ENCODE measurements at regions of chr11 and their contacts with region 1.

Region 1: GRCh38 chr11:33375688-33376311 is 118.6 kb downstream of the HIPK3 start:
- DNase-seq: no peak
- ATAC-seq: no peak
- H3K4me3 ChIP-seq: peak within 1 kb of the TSS; percentile 63
- H3K27ac ChIP-seq: no peak within 1 kb of the TSS
- H3K4me1 ChIP-seq: no peaks in the 10 kb centered on the region
- H3K27me3 ChIP-seq: peaks cover 0 to 42% (median 6%) of the 10 kb centered on the region in 3 donors
- CTCF ChIP-seq: no peak

Region 2: GRCh38 chr11:33329705-33330329 is 46.0 kb before region 1 on chr11:
- intact Hi-C with region 1: no loop called
- DNase-seq: no peak
- ATAC-seq: peak; percentile 70 to 84 (median 76)
- H3K4me3 ChIP-seq: no peak overlapping the region
- H3K27ac ChIP-seq: peak overlapping the region; percentile 23
- H3K4me1 ChIP-seq: peaks cover 79% of the 10 kb centered on the region
- H3K27me3 ChIP-seq: no peaks in the 10 kb centered on the region
- CTCF ChIP-seq: peak; percentile 62

Region 3: DNA sequence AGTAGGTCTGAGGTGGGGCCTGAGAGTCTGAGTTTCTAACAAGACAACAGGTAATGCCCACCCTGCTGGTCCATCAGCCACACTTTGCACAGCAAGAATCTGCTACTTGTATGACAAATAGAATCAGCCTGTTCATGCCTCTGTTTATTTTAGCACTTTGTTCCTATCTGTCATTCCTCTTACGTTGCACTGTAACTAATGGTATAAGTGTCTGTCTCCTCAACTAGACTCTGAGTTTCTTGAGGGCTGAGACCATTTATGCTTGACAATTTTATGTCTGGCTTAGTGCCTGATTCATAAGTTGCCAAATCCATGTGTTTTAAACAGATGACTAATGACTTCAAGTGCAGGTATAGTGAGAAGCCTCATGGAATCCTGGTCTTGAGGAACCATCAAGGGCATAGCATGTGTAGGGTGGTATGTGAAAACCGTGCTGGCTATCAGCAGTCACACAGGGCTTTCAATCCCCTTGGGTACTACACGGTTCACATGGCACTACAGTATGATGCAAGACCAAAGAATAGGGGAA is 115.1 kb after region 1 on chr11:
- intact Hi-C with region 1: no loop called
- DNase-seq: no peak
- ATAC-seq: no peak
- H3K4me3 ChIP-seq: no peak overlapping the region
- H3K27ac ChIP-seq: no peak overlapping the region
- H3K4me1 ChIP-seq: no peaks in the 10 kb centered on the region
- H3K27me3 ChIP-seq: peaks cover 0 to 12% (median 0%) of the 10 kb centered on the region in 3 donors
- CTCF ChIP-seq: no peak

Region 4: GRCh38 chr11:33531743-33532181 is 156.0 kb after region 1 on chr11:
- intact Hi-C with region 1: loop called in 1 of 2 experiments (anchors 10 kb)
- DNase-seq: peak; percentile 72 to 76
- ATAC-seq: peak; percentile 54 to 85 (median 74)
- H3K4me3 ChIP-seq: no peak overlapping the region
- H3K27ac ChIP-seq: no peak overlapping the region
- H3K4me1 ChIP-seq: no peaks in the 10 kb centered on the region
- H3K27me3 ChIP-seq: peaks cover 0 to 5% (median 4%) of the 10 kb centered on the region in 3 donors
- CTCF ChIP-seq: no peak

Region 5: GRCh38 chr11:33682446-33682845 is 306.6 kb after region 1 on chr11:
- intact Hi-C with region 1: loop called in 1 of 2 experiments (anchors 5 kb)
- DNase-seq: no peak
- ATAC-seq: no peak
- H3K4me3 ChIP-seq: no peak overlapping the region
- H3K27ac ChIP-seq: no peak overlapping the region
- H3K4me1 ChIP-seq: no peaks in the 10 kb centered on the region
- H3K27me3 ChIP-seq: no peaks in the 10 kb centered on the region
- CTCF ChIP-seq: no peak

Measured in psoas muscle (tissue), 8 donors.